Activated CD4-positive, alpha-beta T cell treated with anti-CD3 and anti-CD28 coated beads for 36 hours (primary cell): ENCODE measurements at regions of chr11 and their contacts with region 1.

Region 1: DNA sequence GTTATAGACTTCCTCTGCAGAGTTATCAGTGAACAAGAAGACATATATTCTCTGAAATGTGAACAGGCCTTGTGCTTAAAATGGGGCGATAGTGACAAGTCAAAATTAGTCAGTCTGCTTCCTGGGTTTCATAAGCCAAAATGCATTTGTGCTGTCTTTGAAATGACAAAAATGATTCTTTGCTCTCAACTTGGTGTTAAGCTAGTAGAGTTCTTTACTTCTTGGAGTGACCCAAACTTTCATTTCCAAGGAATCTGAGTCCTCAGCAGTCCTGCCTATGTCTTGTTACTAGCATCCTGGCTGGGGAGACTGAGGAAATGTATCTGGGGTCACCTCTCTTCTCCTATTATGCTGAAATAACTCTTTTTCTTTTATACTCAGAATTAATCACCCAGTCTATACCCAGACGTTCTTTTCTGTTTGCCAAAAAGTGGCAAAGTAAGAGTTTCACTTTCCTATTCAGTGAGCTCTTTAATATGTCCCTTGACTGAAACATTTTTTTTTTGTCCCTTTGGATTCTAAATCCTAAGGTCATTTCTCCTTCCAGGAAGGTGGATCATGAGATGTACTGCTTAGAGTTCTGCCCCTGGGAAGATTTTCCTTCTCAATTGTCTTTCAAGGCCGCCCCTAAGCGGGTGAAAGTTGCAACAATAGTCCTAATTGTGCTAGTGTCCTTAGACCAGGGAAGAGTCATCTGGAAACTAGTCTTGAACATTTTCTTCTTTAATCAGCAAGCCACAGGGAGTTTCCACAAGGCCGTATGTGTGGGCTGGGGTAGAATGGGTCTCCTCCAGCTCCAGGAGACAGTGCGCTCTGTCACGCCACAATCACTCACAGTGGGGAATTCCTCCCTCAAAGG is 53.0 kb upstream of the RDX start:
- DNase-seq: peak; percentile 90
- ATAC-seq: peak; percentile 77
- H3K4me3 Mint-ChIP-seq: peak overlapping the region; percentile 51
- H3K27ac Mint-ChIP-seq: peak overlapping the region; percentile 98
- H3K4me1 Mint-ChIP-seq: peaks cover 64% of the 10 kb centered on the region
- H3K27me3 Mint-ChIP-seq: no peaks in the 10 kb centered on the region

Region 2: GRCh38 chr11:110092515-110093404 is 256.6 kb before region 1 on chr11 and contains the start of gene ZC3H12C:
- CTCF ChIA-PET with region 1: no interaction called
- POLR2A ChIA-PET with region 1: no interaction called
- intact Hi-C with region 1: loop called in 1 of 2 experiments (anchors 5 kb)
- DNase-seq: peak; percentile 74
- ATAC-seq: peak; percentile 73
- H3K4me3 Mint-ChIP-seq: peak within 1 kb of the TSS; percentile 74
- H3K27ac Mint-ChIP-seq: peak within 1 kb of the TSS; percentile 52
- H3K4me1 Mint-ChIP-seq: peaks cover 10% of the 10 kb centered on the region
- H3K27me3 Mint-ChIP-seq: peaks cover 49% of the 10 kb centered on the region
- total RNA-seq, gene ZC3H12C: 1.6 TPM

Region 3: GRCh38 chr11:110311783-110312579 is 37.4 kb before region 1 on chr11:
- CTCF ChIA-PET with region 1: interaction called, 7 read pairs
- POLR2A ChIA-PET with region 1: no interaction called
- intact Hi-C with region 1: loop called (anchors 1 to 5 kb)
- DNase-seq: peak; percentile 21
- ATAC-seq: peak; percentile 86
- H3K4me3 Mint-ChIP-seq: no peak overlapping the region
- H3K27ac Mint-ChIP-seq: peak overlapping the region; percentile 72
- H3K4me1 Mint-ChIP-seq: peaks cover 15% of the 10 kb centered on the region
- H3K27me3 Mint-ChIP-seq: no peaks in the 10 kb centered on the region

Region 4: GRCh38 chr11:110337570-110338193 is 11.7 kb before region 1 on chr11:
- CTCF ChIA-PET with region 1: interaction called, 4 read pairs
- POLR2A ChIA-PET with region 1: interaction called, 3 read pairs
- intact Hi-C with region 1: loop called (anchors 1 kb)
- DNase-seq: peak; percentile 73
- ATAC-seq: peak; percentile 92
- H3K4me3 Mint-ChIP-seq: no peak overlapping the region
- H3K27ac Mint-ChIP-seq: peak overlapping the region; percentile 51
- H3K4me1 Mint-ChIP-seq: peaks cover 21% of the 10 kb centered on the region
- H3K27me3 Mint-ChIP-seq: no peaks in the 10 kb centered on the region

Region 5: DNA sequence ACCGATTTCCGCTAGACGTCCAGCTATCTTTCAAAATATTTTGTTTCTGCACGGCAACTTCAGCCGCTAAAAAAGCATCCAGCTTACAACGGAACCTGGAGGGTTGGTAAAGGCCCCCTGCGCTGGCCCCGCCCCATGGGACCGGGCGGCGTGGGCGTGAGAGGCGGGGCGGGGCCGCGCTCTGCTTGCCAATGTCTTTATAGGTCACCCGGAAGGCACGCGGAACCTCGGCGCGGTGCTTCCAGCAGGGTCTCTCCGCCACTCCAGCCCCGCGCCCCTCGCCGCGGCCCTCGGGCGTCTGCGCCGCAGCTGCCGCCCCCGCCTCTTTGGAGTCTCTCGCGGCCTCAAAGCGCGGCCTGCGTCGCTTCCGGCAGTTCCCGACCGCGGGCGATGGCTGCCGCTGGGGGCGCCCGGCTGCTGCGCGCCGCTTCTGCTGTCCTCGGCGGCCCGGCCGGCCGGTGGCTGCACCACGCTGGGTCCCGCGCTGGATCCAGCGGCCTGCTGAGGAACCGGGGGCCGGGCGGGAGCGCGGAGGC is 80.4 kb after region 1 on chr11 and contains the start of gene FDX1:
- CTCF ChIA-PET with region 1: interaction called, 6 read pairs
- POLR2A ChIA-PET with region 1: interaction called, 9 read pairs
- intact Hi-C with region 1: loop called (anchors 1 kb)
- DNase-seq: peak; percentile 93
- ATAC-seq: peak; percentile 83
- H3K4me3 Mint-ChIP-seq: peak within 1 kb of the TSS; percentile 99
- H3K27ac Mint-ChIP-seq: peak within 1 kb of the TSS; percentile 97
- H3K4me1 Mint-ChIP-seq: peaks cover 41% of the 10 kb centered on the region
- H3K27me3 Mint-ChIP-seq: no peaks in the 10 kb centered on the region
- total RNA-seq, gene FDX1: 8.2 to 13.1 TPM

Region 6: GRCh38 chr11:111378861-111379601 is 1029.7 kb after region 1 on chr11 and contains the start of gene POU2AF1:
- CTCF ChIA-PET with region 1: no interaction called
- POLR2A ChIA-PET with region 1: no interaction called
- intact Hi-C with region 1: loop called in 1 of 2 experiments (anchors 1 kb)
- DNase-seq: peak; percentile 91
- ATAC-seq: peak; percentile 77
- H3K4me3 Mint-ChIP-seq: peak within 1 kb of the TSS; percentile 69
- H3K27ac Mint-ChIP-seq: peak within 1 kb of the TSS; percentile 74
- H3K4me1 Mint-ChIP-seq: peaks cover 61% of the 10 kb centered on the region
- H3K27me3 Mint-ChIP-seq: no peaks in the 10 kb centered on the region
- total RNA-seq, gene POU2AF1: 9.6 to 10.0 TPM

Region 7: GRCh38 chr11:111938687-111939160 is 1589.4 kb after region 1 on chr11:
- CTCF ChIA-PET with region 1: no interaction called
- POLR2A ChIA-PET with region 1: no interaction called
- intact Hi-C with region 1: loop called in 1 of 2 experiments (anchors 5 kb)
- DNase-seq: peak; percentile 66
- ATAC-seq: peak; percentile 89
- H3K4me3 Mint-ChIP-seq: peak overlapping the region; percentile 73
- H3K27ac Mint-ChIP-seq: peak overlapping the region; percentile 93
- H3K4me1 Mint-ChIP-seq: peaks cover 51% of the 10 kb centered on the region
- H3K27me3 Mint-ChIP-seq: no peaks in the 10 kb centered on the region